Common myeloid progenitor, CD34-positive (primary cell): ENCODE measurements at regions of chr11 and their contacts with region 1.

Region 1: GRCh38 chr11:123707606-123708205 is 33.8 kb downstream of the ZNF202 start:
- DNase-seq: peak; percentile 59 to 79 (median 73)
- H3K4me3 ChIP-seq: no peak overlapping the region
- H3K27ac ChIP-seq: no peak overlapping the region
- H3K4me1 ChIP-seq: no peaks in the 10 kb centered on the region
- H3K27me3 ChIP-seq: no peaks in the 10 kb centered on the region

Region 2: DNA sequence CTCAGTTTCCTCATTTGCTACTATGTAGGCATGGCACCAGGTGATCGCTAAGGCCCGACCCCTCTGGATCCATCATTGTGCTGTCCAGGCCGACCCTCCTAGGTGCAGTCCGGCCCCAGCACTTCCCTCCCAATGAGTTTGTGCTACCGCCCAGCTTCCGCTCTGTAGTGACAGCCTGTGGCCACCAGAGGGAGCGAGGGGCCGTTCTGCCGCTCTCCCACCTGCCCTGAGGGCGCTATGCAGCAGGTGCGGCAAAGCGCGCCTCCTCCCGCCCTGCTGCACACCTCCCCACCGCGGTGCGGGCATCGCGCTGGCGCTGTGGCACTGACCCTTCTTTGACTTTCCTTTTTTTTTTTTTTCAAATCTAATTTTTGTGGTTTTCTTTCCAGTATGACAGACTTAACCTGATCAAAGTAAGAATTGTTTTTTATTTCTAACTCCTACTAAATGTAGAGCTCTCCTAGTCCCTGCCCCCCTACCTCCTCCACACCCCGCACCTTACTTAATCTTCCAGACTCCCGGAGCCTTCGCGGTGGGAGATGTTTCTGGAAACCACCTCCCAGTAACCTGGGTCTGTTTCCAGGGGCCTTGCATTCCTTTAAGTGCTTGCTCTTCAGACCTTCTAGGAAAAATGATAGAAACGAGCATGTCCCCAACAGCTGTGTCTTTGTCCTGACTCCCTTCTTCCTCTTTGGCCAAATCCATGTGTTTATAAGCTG is 127.0 kb before region 1 on chr11:
- CTCF ChIA-PET with region 1: interaction called, 18 read pairs
- POLR2A ChIA-PET with region 1: no interaction called
- DNase-seq: peak; percentile 40 to 58 (median 58)
- H3K4me3 ChIP-seq: no peak overlapping the region
- H3K27ac ChIP-seq: no peak overlapping the region
- H3K4me1 ChIP-seq: peaks cover 3 to 16% (median 8%) of the 10 kb centered on the region in 4 experiments
- H3K27me3 ChIP-seq: no peaks in the 10 kb centered on the region

Region 3: GRCh38 chr11:123640677-123641494 is 66.8 kb before region 1 on chr11:
- CTCF ChIA-PET with region 1: interaction called, 65 read pairs
- POLR2A ChIA-PET with region 1: no interaction called
- DNase-seq: peak; percentile 56 to 70 (median 69)
- H3K4me3 ChIP-seq: no peak overlapping the region
- H3K27ac ChIP-seq: no peak overlapping the region
- H3K4me1 ChIP-seq: peaks cover 0 to 4% (median 2%) of the 10 kb centered on the region in 4 experiments
- H3K27me3 ChIP-seq: peaks cover 0 to 10% (median 5%) of the 10 kb centered on the region in 5 experiments

Region 4: GRCh38 chr11:123654566-123655081 is 53.1 kb before region 1 on chr11 and contains the start of gene SCN3B:
- CTCF ChIA-PET with region 1: interaction called, 19 read pairs
- POLR2A ChIA-PET with region 1: no interaction called
- DNase-seq: peak in 2 of 3 donors; percentile 26 to 50
- H3K4me3 ChIP-seq: peak within 1 kb of the TSS; percentile 23 to 80 (median 66)
- H3K27ac ChIP-seq: no peak within 1 kb of the TSS
- H3K4me1 ChIP-seq: peaks cover 3 to 15% (median 14%) of the 10 kb centered on the region in 4 experiments
- H3K27me3 ChIP-seq: peaks cover 8 to 60% (median 30%) of the 10 kb centered on the region in 5 experiments

Region 5: DNA sequence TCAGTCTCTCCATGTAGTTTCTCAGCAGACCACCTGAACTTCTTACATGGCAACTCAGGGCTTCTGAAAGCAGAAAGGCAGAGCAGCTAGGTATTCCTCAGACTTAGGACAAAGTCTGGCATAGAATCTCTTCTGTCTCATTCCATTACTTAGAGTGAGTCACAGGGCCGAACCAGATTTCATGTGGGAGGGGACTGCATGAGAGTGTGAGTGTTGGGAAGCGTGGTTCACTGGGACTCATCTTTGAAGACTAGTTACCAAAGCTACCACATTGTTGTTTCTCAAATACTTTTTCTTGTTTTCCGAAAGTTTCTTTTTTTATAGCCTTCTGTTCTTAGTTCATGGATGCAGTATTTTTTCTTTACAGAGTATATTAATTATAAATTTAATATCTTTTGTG is 17.2 kb before region 1 on chr11:
- CTCF ChIA-PET with region 1: interaction called, 16 read pairs
- POLR2A ChIA-PET with region 1: no interaction called
- DNase-seq: no peak
- H3K4me3 ChIP-seq: no peak overlapping the region
- H3K27ac ChIP-seq: no peak overlapping the region
- H3K4me1 ChIP-seq: no peaks in the 10 kb centered on the region
- H3K27me3 ChIP-seq: peaks cover 0 to 13% (median 6%) of the 10 kb centered on the region in 5 experiments

Region 6: DNA sequence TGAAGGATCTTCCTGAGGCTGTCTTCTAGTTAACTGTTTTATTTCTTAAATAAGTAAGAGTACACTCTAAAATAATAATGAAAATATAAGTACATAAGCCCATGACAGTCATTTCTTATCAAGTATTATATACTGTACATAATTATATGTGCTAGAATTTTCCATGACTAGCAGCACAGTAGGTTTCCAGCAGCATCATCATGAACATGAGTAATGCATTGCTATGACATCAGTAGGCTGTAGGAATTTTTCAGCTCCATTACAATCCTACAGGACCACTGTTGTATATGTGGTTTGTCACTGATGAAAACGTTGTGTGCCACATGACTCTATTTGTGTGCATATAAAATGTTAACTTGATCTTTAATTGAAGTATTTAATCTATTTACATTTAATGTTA is 11.7 kb after region 1 on chr11:
- CTCF ChIA-PET with region 1: interaction called, 13 read pairs
- POLR2A ChIA-PET with region 1: no interaction called
- DNase-seq: no peak
- H3K4me3 ChIP-seq: no peak overlapping the region
- H3K27ac ChIP-seq: no peak overlapping the region
- H3K4me1 ChIP-seq: no peaks in the 10 kb centered on the region
- H3K27me3 ChIP-seq: peaks cover 0 to 2% (median 2%) of the 10 kb centered on the region in 5 experiments

Region 7: DNA sequence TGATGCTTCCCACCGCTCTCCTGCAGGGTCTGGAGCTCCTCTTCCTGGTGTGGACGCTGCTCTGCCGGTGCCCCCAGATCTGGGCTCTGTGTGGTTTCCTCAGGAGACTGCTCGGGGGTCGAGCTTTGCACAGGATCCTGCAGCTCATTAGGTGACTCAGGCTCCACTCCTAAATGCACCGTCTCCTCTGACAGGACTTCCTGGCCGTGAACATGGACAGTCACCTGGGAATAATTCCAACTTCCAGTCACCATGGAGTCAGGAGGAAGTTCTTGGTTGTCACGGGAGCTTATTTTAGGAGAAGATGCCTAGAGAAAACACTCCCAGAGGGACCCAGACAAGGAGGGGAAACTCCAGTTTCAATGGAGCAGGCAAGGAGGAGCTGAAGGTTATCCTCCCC is 21.9 kb after region 1 on chr11:
- CTCF ChIA-PET with region 1: interaction called, 10 read pairs
- POLR2A ChIA-PET with region 1: no interaction called
- DNase-seq: no peak
- H3K4me3 ChIP-seq: no peak overlapping the region
- H3K27ac ChIP-seq: no peak overlapping the region
- H3K4me1 ChIP-seq: no peaks in the 10 kb centered on the region
- H3K27me3 ChIP-seq: no peaks in the 10 kb centered on the region